ENCODE measurements at regions of chr12 and their contacts with region 1.

Region 1: GRCh38 chr12:21631367-21631766 is 26.3 kb downstream of the LDHB start:
- DNase-seq: no peak
- ATAC-seq: no peak
- H3K4me3 ChIP-seq: no peak overlapping the region
- H3K27ac ChIP-seq: no peak overlapping the region
- H3K4me1 ChIP-seq: no peaks in the 10 kb centered on the region
- H3K27me3 ChIP-seq: no peaks in the 10 kb centered on the region
- CTCF ChIP-seq: no peak
- POLR2A ChIP-seq: no peak
- RAD21 ChIP-seq: no peak

Region 2: DNA sequence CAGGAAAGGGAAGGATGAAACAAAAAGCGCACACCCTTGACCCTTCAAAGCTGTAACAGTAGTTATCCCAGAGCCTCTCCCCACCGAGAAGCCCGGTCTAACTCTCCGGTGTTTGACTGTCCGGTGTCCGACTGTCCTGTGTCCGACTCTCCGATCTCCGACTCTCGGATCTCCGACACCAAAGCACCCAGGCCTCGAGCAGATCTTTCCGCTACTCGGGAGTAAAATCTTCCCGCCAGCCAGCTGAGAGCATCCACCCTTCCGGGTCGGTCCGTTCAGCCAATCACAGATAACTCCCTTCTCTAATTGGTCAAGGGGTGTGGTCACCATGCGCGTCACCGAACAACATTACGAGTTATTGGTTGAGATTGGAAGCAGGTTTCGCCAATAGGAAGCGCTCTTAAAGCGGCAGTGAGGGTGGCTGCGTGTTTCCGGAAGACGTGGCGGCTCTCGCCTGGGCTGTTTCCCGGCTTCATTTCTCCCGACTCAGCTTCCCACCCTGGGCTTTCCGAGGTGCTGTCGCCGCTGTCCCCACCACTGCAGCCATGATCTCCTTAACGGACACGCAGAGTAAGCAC is 129.9 kb before region 1 on chr12 and contains the starts of genes GOLT1B and RECQL:
- CTCF ChIA-PET with region 1: no interaction called
- POLR2A ChIA-PET with region 1: no interaction called
- dilution Hi-C with region 1: no loop called
- in situ Hi-C with region 1: no loop called
- intact Hi-C with region 1: no loop called
- DNase-seq: peak; percentile 99
- ATAC-seq: peak; percentile 96
- H3K4me3 ChIP-seq: peak within 1 kb of the TSS; percentile 60
- H3K27ac ChIP-seq: peak within 1 kb of the TSS; percentile 69
- H3K4me1 ChIP-seq: peaks cover 2% of the 10 kb centered on the region
- H3K27me3 ChIP-seq: no peaks in the 10 kb centered on the region
- CTCF ChIP-seq: no peak
- POLR2A ChIP-seq: peak; percentile 93
- RAD21 ChIP-seq: no peak
- total RNA-seq, gene GOLT1B: 50.5 and 83.9 TPM in 2 replicates
- total RNA-seq, gene RECQL: 67.0 and 118 TPM in 2 replicates

Region 3: DNA sequence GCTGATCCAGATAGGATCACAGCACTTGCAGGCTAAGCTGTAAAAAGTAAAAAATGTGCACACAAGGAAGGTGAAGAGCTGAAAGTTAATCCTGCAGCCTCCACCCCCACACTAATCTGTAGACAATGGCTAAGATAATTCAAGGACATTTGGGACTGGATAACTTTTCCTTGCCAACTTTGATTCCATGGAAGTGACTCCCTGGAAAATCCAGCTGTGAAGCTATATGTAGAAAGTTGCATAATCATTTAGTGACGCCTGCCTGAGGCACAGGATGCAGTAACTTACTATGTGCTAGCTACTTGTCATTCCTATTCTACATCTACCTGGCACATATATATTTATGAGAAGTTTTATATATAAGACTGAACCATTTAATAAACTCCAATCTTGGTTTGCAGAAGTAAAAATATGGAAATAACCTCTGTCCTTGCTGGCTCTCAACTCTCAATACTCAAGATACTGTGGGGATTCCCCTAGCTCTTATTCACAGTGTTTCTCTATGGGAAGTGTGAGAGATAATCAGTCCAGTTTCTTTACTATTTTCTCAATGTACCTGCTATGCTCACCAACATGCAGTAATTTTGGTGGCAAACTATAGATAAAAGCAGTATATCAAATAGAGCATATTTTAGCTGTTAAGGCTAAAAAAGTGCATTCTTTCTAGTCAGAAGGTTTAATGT is 11.5 kb after region 1 on chr12:
- CTCF ChIA-PET with region 1: interaction called, 3 read pairs
- POLR2A ChIA-PET with region 1: interaction called, 10 read pairs
- dilution Hi-C with region 1: no loop called
- in situ Hi-C with region 1: no loop called
- intact Hi-C with region 1: no loop called
- DNase-seq: peak; percentile 31
- ATAC-seq: no peak
- H3K4me3 ChIP-seq: no peak overlapping the region
- H3K27ac ChIP-seq: no peak overlapping the region
- H3K4me1 ChIP-seq: no peaks in the 10 kb centered on the region; the same call in none of the 2 replicates
- H3K27me3 ChIP-seq: no peaks in the 10 kb centered on the region
- CTCF ChIP-seq: no peak
- POLR2A ChIP-seq: no peak
- RAD21 ChIP-seq: no peak

Region 4: GRCh38 chr12:21683115-21683514 is 51.7 kb after region 1 on chr12:
- CTCF ChIA-PET with region 1: no interaction called
- POLR2A ChIA-PET with region 1: no interaction called
- dilution Hi-C with region 1: no loop called
- in situ Hi-C with region 1: no loop called
- intact Hi-C with region 1: loop called (anchors 5 kb)
- DNase-seq: no peak
- ATAC-seq: no peak
- H3K4me3 ChIP-seq: no peak overlapping the region
- H3K27ac ChIP-seq: no peak overlapping the region
- H3K4me1 ChIP-seq: no peaks in the 10 kb centered on the region
- H3K27me3 ChIP-seq: peaks cover 3% of the 10 kb centered on the region
- CTCF ChIP-seq: no peak
- POLR2A ChIP-seq: no peak
- RAD21 ChIP-seq: no peak